ENCODE measurements at regions of chr15 and their contacts with region 1.

Region 1: DNA sequence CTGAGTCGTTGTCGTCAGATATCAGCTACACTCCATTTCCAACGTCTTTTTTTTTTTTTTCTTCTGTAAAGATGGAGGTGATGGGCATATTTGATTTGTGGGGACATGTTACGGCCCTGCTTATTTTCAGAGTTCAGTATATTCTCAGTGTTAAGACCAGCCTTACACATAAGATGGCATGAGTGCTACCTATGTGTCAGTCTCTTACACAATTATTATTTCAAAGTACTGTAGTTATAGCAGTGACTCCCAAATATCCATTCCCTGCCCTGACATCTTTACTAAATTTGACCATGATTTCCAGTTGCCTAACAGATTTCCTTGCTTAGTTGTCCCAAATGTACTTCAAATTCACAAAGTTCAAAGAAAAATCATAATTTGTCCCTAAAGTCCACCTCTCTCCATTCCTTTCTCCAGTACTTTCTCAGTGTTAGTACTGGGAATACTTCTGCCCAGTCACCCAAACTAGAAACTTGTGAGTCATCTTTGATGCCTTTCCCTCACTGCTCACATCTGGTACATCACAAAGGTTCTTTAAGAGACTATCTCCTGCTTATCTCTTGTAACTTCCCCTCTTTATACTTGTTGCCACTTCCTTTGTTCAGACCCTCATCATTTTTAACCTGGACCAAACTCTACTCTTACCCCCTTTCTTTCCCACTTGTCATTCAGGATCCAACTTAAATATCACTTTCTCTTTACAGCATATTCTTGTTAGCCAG is 67.0 kb downstream of the ZNF609 start:
- DNase-seq: no peak
- H3K4me3 ChIP-seq: no peak overlapping the region
- H3K27ac ChIP-seq: no peak overlapping the region
- H3K4me1 ChIP-seq: peaks cover 9% of the 10 kb centered on the region
- H3K27me3 ChIP-seq: no peaks in the 10 kb centered on the region
- CTCF ChIP-seq: no peak
- EP300 ChIP-seq: no peak
- POLR2A ChIP-seq: no peak

Region 2: DNA sequence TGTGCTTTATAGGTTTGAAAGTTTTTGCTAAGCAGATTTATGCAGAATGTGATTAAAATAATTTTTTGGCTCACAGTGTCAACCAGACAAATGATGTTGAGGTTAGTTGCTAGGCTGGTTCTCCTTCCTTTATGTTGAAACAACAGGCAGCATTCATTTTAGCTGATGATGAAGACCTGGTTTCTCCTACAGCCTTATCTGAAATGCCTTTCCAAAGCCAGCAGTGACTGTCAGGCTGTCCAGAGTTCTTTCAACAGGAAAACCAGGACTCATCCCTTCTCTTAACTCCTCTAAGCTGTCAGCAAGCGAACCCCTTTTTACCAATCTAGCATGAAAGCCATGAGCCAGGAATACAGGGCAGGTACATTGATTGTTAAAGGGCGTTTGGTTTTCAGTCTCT is 17.0 kb after region 1 on chr15:
- intact Hi-C with region 1: loop called in 1 of 4 experiments (anchors 1 kb)
- DNase-seq: no peak
- H3K4me3 ChIP-seq: no peak overlapping the region
- H3K27ac ChIP-seq: no peak overlapping the region
- H3K4me1 ChIP-seq: peaks cover 1% of the 10 kb centered on the region
- H3K27me3 ChIP-seq: no peaks in the 10 kb centered on the region
- CTCF ChIP-seq: no peak
- EP300 ChIP-seq: no peak
- POLR2A ChIP-seq: no peak

Measured in ovary (tissue), 10 donors.